Activated B cell treated with CpG ODN at 0.5 μM for 24 hours (primary cell): ENCODE measurements at regions of chr7 and their contacts with region 1.

Region 1: DNA sequence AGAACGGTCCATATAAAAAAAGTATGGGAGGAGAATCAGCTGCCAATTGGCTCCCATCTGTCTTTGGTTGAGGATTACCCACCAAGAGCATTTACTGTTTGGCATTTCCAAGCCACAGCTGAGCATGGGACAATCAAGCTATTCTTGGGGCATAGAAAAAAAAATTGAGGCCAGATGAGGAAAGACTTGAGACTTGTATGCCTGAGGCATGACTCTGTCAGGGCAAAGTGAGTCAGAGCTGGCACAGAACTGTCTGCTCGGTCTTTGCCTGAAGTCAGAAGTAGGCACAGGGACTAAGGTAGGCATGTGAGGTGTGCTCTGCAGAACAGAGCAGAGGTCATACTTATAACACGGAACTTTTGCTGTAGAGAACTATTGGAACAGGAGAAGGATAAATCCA is 126.5 kb upstream of the CHRM2 start:
- DNase-seq: no peak
- ATAC-seq: no peak
- H3K4me3 Mint-ChIP-seq: no peak overlapping the region
- H3K27ac Mint-ChIP-seq: no peak overlapping the region
- H3K4me1 Mint-ChIP-seq: no peaks in the 10 kb centered on the region
- H3K27me3 Mint-ChIP-seq: no peaks in the 10 kb centered on the region
- CTCF ChIP-seq: no peak

Region 2: GRCh38 chr7:135186841-135187253 is 1555.1 kb before region 1 on chr7:
- CTCF ChIA-PET with region 1: no interaction called
- POLR2A ChIA-PET with region 1: no interaction called
- intact Hi-C with region 1: no loop called
- DNase-seq: peak; percentile 60
- ATAC-seq: peak; percentile 76
- H3K4me3 Mint-ChIP-seq: peak overlapping the region; percentile 74
- H3K27ac Mint-ChIP-seq: peak overlapping the region; percentile 80
- H3K4me1 Mint-ChIP-seq: peaks cover 51% of the 10 kb centered on the region
- H3K27me3 Mint-ChIP-seq: no peaks in the 10 kb centered on the region
- CTCF ChIP-seq: no peak

Region 3: GRCh38 chr7:136665878-136666509 is 75.9 kb before region 1 on chr7:
- CTCF ChIA-PET with region 1: no interaction called
- POLR2A ChIA-PET with region 1: no interaction called
- intact Hi-C with region 1: no loop called
- DNase-seq: no peak
- ATAC-seq: no peak
- H3K4me3 Mint-ChIP-seq: no peak overlapping the region
- H3K27ac Mint-ChIP-seq: no peak overlapping the region
- H3K4me1 Mint-ChIP-seq: no peaks in the 10 kb centered on the region
- H3K27me3 Mint-ChIP-seq: no peaks in the 10 kb centered on the region
- CTCF ChIP-seq: no peak

Region 4: GRCh38 chr7:136857573-136857972 is 115.6 kb after region 1 on chr7:
- CTCF ChIA-PET with region 1: no interaction called
- POLR2A ChIA-PET with region 1: no interaction called
- intact Hi-C with region 1: loop called (anchors 5 kb)
- DNase-seq: no peak
- ATAC-seq: no peak
- H3K4me3 Mint-ChIP-seq: no peak overlapping the region
- H3K27ac Mint-ChIP-seq: no peak overlapping the region
- H3K4me1 Mint-ChIP-seq: no peaks in the 10 kb centered on the region
- H3K27me3 Mint-ChIP-seq: no peaks in the 10 kb centered on the region
- CTCF ChIP-seq: no peak